Common myeloid progenitor, CD34-positive (primary cell): ENCODE measurements at regions of chr9 and their contacts with region 1.

Region 1: GRCh38 chr9:87324613-87325194 is 173.0 kb upstream of the DAPK1 start:
- DNase-seq: peak; percentile 40 to 72 (median 65)
- H3K4me3 ChIP-seq: no peak overlapping the region
- H3K27ac ChIP-seq: no peak overlapping the region
- H3K4me1 ChIP-seq: no peaks in the 10 kb centered on the region
- H3K27me3 ChIP-seq: peaks cover 0 to 8% (median 0%) of the 10 kb centered on the region in 5 experiments

Region 2: GRCh38 chr9:86434039-86434726 is 890.5 kb before region 1 on chr9:
- CTCF ChIA-PET with region 1: interaction called, 21 read pairs
- POLR2A ChIA-PET with region 1: no interaction called
- DNase-seq: peak; percentile 40 to 68 (median 63)
- H3K4me3 ChIP-seq: no peak overlapping the region
- H3K27ac ChIP-seq: no peak overlapping the region
- H3K4me1 ChIP-seq: no peaks in the 10 kb centered on the region
- H3K27me3 ChIP-seq: no peaks in the 10 kb centered on the region

Region 3: GRCh38 chr9:86486891-86487837 is 837.5 kb before region 1 on chr9:
- CTCF ChIA-PET with region 1: interaction called, 46 read pairs
- POLR2A ChIA-PET with region 1: no interaction called
- DNase-seq: peak; percentile 33 to 63 (median 62)
- H3K4me3 ChIP-seq: no peak overlapping the region
- H3K27ac ChIP-seq: no peak overlapping the region
- H3K4me1 ChIP-seq: peaks cover 0 to 4% (median 2%) of the 10 kb centered on the region in 4 experiments
- H3K27me3 ChIP-seq: peaks cover 0 to 8% (median 0%) of the 10 kb centered on the region in 5 experiments